ENCODE measurements at regions of chrX and their contacts with region 1.

Region 1: GRCh38 chrX:153662266-153662665 is 11.3 kb downstream of the PNCK start:
- DNase-seq: peak in 1 of 5 donors; percentile 69
- ATAC-seq: no peak
- H3K4me3 ChIP-seq: peak overlapping the region in 1 of 12 donors; percentile 12
- H3K27ac ChIP-seq: no peak overlapping the region
- H3K4me1 ChIP-seq: no peaks in the 10 kb centered on the region
- H3K27me3 ChIP-seq: peaks cover 0 to 40% (median 5%) of the 10 kb centered on the region in 9 donors
- CTCF ChIP-seq: peak in 11 of 12 donors; percentile 22 to 49 (median 36)
- POLR2A ChIP-seq: no peak

Region 2: DNA sequence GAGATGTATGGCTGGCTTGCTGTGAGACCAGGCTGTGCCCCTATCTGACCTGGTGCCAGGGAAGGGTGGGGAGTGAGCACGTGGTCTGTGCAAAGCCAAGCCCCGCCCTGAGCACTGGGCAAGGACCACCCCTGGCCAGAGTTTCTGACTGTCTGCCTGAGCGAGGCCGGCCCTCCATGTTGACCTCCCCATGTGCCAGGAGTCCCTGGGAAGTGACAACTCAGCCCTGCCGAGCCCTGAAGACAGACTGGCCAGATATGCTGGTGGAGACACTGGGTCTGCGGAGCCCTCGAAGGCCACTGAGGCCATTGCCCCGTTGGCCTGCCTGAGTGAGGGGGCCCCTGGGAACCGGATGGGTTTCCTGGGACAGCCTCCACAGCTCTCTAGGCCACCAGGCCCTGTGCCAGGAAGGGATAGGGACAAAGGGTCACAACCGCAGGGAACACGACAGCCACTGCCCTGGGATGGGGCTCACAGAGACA is 174.6 kb before region 1 on chrX:
- intact Hi-C with region 1: no loop called
- DNase-seq: peak in 1 of 5 donors; percentile 66
- ATAC-seq: peak in 3 of 4 donors; percentile 10 to 18 (median 17)
- H3K4me3 ChIP-seq: no peak overlapping the region
- H3K27ac ChIP-seq: peak overlapping the region in 11 of 12 donors; percentile 23 to 87 (median 58)
- H3K4me1 ChIP-seq: peaks cover 0 to 25% (median 11%) of the 10 kb centered on the region in 12 donors
- H3K27me3 ChIP-seq: no peaks in the 10 kb centered on the region
- CTCF ChIP-seq: no peak
- POLR2A ChIP-seq: no peak

Region 3: DNA sequence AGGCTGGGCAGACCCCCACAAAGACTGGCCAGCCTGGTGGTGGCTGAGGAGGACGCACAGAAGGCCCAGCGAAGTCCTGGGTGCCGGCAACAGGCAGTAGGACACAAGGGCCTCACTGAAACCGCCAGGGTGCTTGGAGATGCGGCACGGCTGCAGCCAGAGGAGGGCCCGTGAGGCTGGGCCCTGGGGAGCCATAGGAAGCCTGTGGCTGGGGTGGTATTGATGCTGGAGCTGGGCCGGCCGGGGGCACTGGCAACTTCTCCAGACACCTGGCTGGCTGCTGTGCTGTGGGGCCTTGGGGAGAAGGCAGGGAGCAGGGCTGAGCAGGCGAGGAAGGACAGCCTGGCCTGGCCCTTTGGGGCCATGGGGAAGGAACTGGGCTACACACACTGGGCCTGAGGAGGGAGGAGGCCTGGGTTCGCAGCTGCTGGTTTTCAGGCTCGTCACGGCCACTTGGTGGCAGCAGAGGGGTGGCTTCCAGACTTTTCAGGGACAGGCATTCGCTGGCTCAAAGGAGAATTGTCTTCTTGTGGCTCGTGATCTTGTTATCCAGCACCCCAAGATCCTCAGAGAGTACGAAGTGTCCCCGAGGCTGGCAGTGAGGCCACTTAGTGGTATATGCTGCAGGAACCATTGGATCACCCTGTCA is 107.6 kb before region 1 on chrX:
- intact Hi-C with region 1: loop called in 8 of 10 experiments (anchors 5 kb)
- DNase-seq: peak; percentile 44 to 81 (median 54)
- ATAC-seq: peak; percentile 42 to 80 (median 66)
- H3K4me3 ChIP-seq: no peak overlapping the region
- H3K27ac ChIP-seq: no peak overlapping the region
- H3K4me1 ChIP-seq: no peaks in the 10 kb centered on the region
- H3K27me3 ChIP-seq: peaks cover 0 to 14% (median 0%) of the 10 kb centered on the region in 9 donors
- CTCF ChIP-seq: peak; percentile 46 to 73 (median 62)
- POLR2A ChIP-seq: no peak

Region 4: GRCh38 chrX:153573984-153574383 is 88.3 kb before region 1 on chrX:
- intact Hi-C with region 1: no loop called
- DNase-seq: no peak
- ATAC-seq: no peak
- H3K4me3 ChIP-seq: no peak overlapping the region
- H3K27ac ChIP-seq: no peak overlapping the region
- H3K4me1 ChIP-seq: no peaks in the 10 kb centered on the region
- H3K27me3 ChIP-seq: peaks cover 0 to 29% (median 0%) of the 10 kb centered on the region in 9 donors
- CTCF ChIP-seq: no peak
- POLR2A ChIP-seq: no peak

Region 5: GRCh38 chrX:153609917-153610428 is 52.3 kb before region 1 on chrX:
- intact Hi-C with region 1: loop called in 9 of 10 experiments (anchors 2 to 10 kb)
- DNase-seq: peak; percentile 68 to 88 (median 71)
- ATAC-seq: peak; percentile 82 to 95 (median 92)
- H3K4me3 ChIP-seq: peak overlapping the region in 11 of 12 donors; percentile 7 to 51 (median 45)
- H3K27ac ChIP-seq: no peak overlapping the region
- H3K4me1 ChIP-seq: peaks cover 0 to 11% (median 4%) of the 10 kb centered on the region in 12 donors
- H3K27me3 ChIP-seq: peaks cover 0 to 50% (median 0%) of the 10 kb centered on the region in 9 donors
- CTCF ChIP-seq: peak; percentile 63 to 82 (median 72)
- POLR2A ChIP-seq: no peak